ENCODE measurements at regions of chrX and their contacts with region 1.

Region 1: GRCh38 chrX:107716816-107717700 is 58.5 kb downstream of the TSC22D3 start:
- DNase-seq: peak; percentile 81 to 90
- ATAC-seq: peak; percentile 81 to 90 (median 87)
- H3K4me3 ChIP-seq: peak overlapping the region; percentile 42 to 81 (median 74)
- H3K27ac ChIP-seq: peak overlapping the region; percentile 81 to 99 (median 95)
- H3K4me1 ChIP-seq: peaks cover 3 to 61% (median 31%) of the 10 kb centered on the region in 9 donors
- H3K27me3 ChIP-seq: peaks cover 0 to 23% (median 0%) of the 10 kb centered on the region in 7 donors
- CTCF ChIP-seq: no peak

Region 2: GRCh38 chrX:107755721-107756120 is 38.7 kb after region 1 on chrX:
- intact Hi-C with region 1: loop called in 1 of 10 experiments (anchors 1 kb)
- DNase-seq: no peak
- ATAC-seq: peak; percentile 61 to 89 (median 84)
- H3K4me3 ChIP-seq: no peak overlapping the region
- H3K27ac ChIP-seq: peak overlapping the region; percentile 0 to 85 (median 70)
- H3K4me1 ChIP-seq: peaks cover 0 to 64% (median 36%) of the 10 kb centered on the region in 9 donors
- H3K27me3 ChIP-seq: peaks cover 0 to 29% (median 0%) of the 10 kb centered on the region in 7 donors
- CTCF ChIP-seq: no peak

Region 3: GRCh38 chrX:108033890-108034289 is 316.8 kb after region 1 on chrX:
- intact Hi-C with region 1: no loop called
- DNase-seq: no peak
- ATAC-seq: no peak
- H3K4me3 ChIP-seq: no peak overlapping the region
- H3K27ac ChIP-seq: no peak overlapping the region
- H3K4me1 ChIP-seq: no peaks in the 10 kb centered on the region
- H3K27me3 ChIP-seq: peaks cover 0 to 80% (median 0%) of the 10 kb centered on the region in 7 donors
- CTCF ChIP-seq: no peak

Region 4: DNA sequence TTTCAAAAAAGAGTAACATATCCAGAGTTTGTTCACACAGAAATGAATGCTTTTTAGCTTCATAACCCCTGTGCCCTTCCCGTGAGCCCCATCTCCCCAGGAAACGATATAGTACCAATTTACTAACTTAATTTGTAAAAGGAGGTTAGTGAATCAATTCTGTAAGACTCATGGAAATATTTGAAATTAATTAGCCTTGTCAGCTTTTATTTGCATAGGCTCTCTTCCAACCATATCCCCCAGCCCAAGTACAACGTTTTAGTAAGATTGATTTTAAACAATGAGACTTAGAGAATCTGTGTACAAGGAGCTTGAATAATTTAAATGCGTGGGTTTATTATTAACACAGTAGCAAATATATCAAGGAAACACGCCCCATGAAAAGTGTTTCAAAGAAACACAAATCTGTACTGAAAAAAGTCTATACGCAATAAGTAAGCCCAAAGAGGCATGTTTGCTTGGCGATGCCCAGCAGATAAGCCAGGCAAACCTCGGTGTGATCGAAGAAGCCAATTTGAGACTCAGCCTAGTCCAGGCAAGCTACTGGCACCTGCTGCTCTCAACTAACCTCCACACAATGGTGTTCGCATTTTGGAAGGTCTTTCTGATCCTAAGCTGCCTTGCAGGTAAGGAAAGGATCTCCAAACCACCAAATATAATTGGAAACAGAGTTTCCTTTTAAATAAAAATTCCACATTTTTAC is 327.6 kb after region 1 on chrX and contains the start of gene VSIG1:
- intact Hi-C with region 1: no loop called
- DNase-seq: no peak
- ATAC-seq: no peak
- H3K4me3 ChIP-seq: no peak within 1 kb of the TSS
- H3K27ac ChIP-seq: no peak within 1 kb of the TSS
- H3K4me1 ChIP-seq: no peaks in the 10 kb centered on the region
- H3K27me3 ChIP-seq: peaks cover 0 to 57% (median 0%) of the 10 kb centered on the region in 7 donors
- CTCF ChIP-seq: no peak
- total RNA-seq, gene VSIG1: 0.09 to 0.46 (median 0.16) TPM in 3 of 10 donors, not detected in the others

Measured in heart right ventricle (tissue), 16 donors.